CD8-positive, alpha-beta T cell (primary cell): ENCODE measurements at regions of chr21 and their contacts with region 1.

Region 1: GRCh38 chr21:42258153-42258884 is 39.4 kb downstream of the ABCG1 start:
- DNase-seq: peak; percentile 70 to 89 (median 84)
- ATAC-seq: peak; percentile 95
- H3K4me3 ChIP-seq: no peak overlapping the region
- H3K4me3 Mint-ChIP-seq: no peak overlapping the region
- H3K27ac ChIP-seq: no peak overlapping the region
- H3K27ac Mint-ChIP-seq: peak overlapping the region; percentile 42
- H3K4me1 ChIP-seq: peaks cover 14% of the 10 kb centered on the region
- H3K4me1 Mint-ChIP-seq: peaks cover 33% of the 10 kb centered on the region
- H3K27me3 ChIP-seq: no peaks in the 10 kb centered on the region
- H3K27me3 Mint-ChIP-seq: no peaks in the 10 kb centered on the region
- CTCF ChIP-seq: peak; percentile 93

Region 2: GRCh38 chr21:42164064-42164789 is 94.1 kb before region 1 on chr21:
- CTCF ChIA-PET with region 1: interaction called, 88 read pairs
- POLR2A ChIA-PET with region 1: no interaction called
- intact Hi-C with region 1: loop called (anchors 1 kb)
- DNase-seq: peak in 8 of 9 experiments; percentile 36 to 75 (median 58)
- ATAC-seq: peak; percentile 34
- H3K4me3 ChIP-seq: no peak overlapping the region
- H3K4me3 Mint-ChIP-seq: no peak overlapping the region
- H3K27ac ChIP-seq: no peak overlapping the region
- H3K27ac Mint-ChIP-seq: no peak overlapping the region
- H3K4me1 ChIP-seq: peaks cover 34% of the 10 kb centered on the region
- H3K4me1 Mint-ChIP-seq: peaks cover 32% of the 10 kb centered on the region
- H3K27me3 ChIP-seq: no peaks in the 10 kb centered on the region
- H3K27me3 Mint-ChIP-seq: no peaks in the 10 kb centered on the region
- CTCF ChIP-seq: peak; percentile 51

Region 3: GRCh38 chr21:42199488-42200458 is 58.5 kb before region 1 on chr21:
- CTCF ChIA-PET with region 1: interaction called, 5 read pairs
- POLR2A ChIA-PET with region 1: interaction called, 3 read pairs
- intact Hi-C with region 1: loop called in 1 of 2 experiments (anchors 1 kb)
- DNase-seq: peak in 4 of 9 experiments; percentile 34 to 76 (median 48)
- ATAC-seq: peak; percentile 77
- H3K4me3 ChIP-seq: no peak overlapping the region
- H3K4me3 Mint-ChIP-seq: peak overlapping the region; percentile 5
- H3K27ac ChIP-seq: peak overlapping the region; percentile 15 to 40
- H3K27ac Mint-ChIP-seq: peak overlapping the region; percentile 89
- H3K4me1 ChIP-seq: peaks cover 39% of the 10 kb centered on the region
- H3K4me1 Mint-ChIP-seq: peaks cover 68% of the 10 kb centered on the region
- H3K27me3 ChIP-seq: no peaks in the 10 kb centered on the region
- H3K27me3 Mint-ChIP-seq: no peaks in the 10 kb centered on the region
- CTCF ChIP-seq: no peak

Region 4: DNA sequence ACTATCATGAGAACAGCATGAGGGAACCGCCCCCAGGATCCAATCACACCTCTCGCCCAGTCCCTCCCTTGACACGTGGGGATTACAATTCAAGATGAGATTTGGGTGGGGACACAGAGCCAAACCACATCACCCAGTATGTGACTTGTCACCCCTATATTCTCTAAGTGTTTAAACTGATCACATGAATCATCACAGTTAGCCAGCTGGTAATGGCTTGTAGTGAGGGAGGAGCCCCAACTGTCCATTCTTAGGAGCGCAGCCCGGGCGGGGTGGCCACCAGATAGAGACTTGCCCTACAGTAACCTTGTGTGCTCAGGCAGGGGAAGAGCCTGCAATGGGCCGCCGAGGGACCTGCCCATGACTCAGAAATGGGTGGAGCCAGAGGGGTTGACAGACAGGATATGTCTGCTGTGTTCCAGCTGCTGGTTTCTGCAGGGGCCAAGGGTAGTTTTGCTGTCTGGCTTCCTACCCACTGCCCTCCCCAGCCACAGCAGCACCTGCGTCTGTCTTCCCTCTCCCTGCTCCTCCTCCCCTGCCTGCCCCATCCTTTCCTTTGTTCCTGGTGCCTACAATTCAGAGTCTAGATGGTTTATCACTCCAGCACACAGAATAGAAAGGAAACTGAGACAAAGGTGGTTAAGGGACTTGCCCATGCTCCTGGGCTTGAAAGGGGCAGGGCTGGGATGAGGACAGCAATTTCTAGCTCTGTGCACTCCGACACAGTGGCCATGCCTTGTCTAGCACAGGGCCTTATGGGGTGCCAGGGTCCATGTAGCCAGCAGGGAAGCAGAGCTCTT is 30.2 kb before region 1 on chr21:
- CTCF ChIA-PET with region 1: interaction called, 21 read pairs
- POLR2A ChIA-PET with region 1: interaction called, 4 read pairs
- intact Hi-C with region 1: no loop called
- DNase-seq: peak; percentile 79 to 99 (median 90)
- ATAC-seq: peak; percentile 87
- H3K4me3 ChIP-seq: peak overlapping the region in 1 of 2 experiments; percentile 11
- H3K4me3 Mint-ChIP-seq: peak overlapping the region; percentile 47
- H3K27ac ChIP-seq: peak overlapping the region; percentile 54 to 90
- H3K27ac Mint-ChIP-seq: peak overlapping the region; percentile 95
- H3K4me1 ChIP-seq: peaks cover 46% of the 10 kb centered on the region
- H3K4me1 Mint-ChIP-seq: peaks cover 83% of the 10 kb centered on the region
- H3K27me3 ChIP-seq: no peaks in the 10 kb centered on the region
- H3K27me3 Mint-ChIP-seq: no peaks in the 10 kb centered on the region
- CTCF ChIP-seq: no peak

Region 5: DNA sequence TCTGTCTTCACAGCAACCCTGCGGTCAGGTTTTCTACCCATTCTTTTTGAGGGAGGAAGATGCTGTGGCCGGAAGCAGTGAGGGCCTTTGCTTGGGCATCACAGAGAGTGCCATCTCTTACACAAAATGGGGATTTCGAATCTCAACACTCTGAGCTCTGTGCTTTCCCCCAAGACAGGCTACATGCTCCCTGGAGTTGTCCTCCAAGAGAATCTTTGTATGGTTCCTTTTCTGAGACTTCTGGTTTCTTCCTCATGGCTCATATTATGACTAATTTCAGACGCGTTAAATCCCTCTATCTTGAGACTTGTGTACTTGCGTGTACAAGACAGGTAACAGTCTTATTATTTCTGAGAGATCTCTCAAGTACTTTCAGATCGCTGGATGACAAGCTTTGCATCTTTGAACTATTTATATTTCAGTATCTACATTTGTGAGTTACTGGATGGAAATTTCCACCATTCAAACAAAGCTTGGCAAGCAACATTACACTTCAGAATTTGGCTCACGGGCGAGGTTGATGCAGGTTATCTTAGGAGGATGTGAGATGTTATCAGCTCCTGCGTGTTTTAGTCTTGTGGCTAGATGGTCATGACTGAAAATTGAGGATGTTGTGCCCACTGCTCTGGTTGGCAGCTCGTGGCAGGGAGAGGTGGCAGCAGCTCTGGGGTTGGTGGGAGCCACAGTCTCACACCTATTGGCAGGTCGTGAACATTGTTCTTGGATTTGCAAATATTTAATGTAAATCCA is 20.0 kb before region 1 on chr21:
- CTCF ChIA-PET with region 1: interaction called, 27 read pairs
- POLR2A ChIA-PET with region 1: no interaction called
- intact Hi-C with region 1: loop called in 1 of 2 experiments (anchors 2 kb)
- DNase-seq: peak in 7 of 9 experiments; percentile 16 to 88 (median 61)
- ATAC-seq: peak; percentile 29
- H3K4me3 ChIP-seq: no peak overlapping the region
- H3K4me3 Mint-ChIP-seq: peak overlapping the region; percentile 63
- H3K27ac ChIP-seq: peak overlapping the region; percentile 45 to 83
- H3K27ac Mint-ChIP-seq: peak overlapping the region; percentile 93
- H3K4me1 ChIP-seq: peaks cover 62% of the 10 kb centered on the region
- H3K4me1 Mint-ChIP-seq: peaks cover 73% of the 10 kb centered on the region
- H3K27me3 ChIP-seq: no peaks in the 10 kb centered on the region
- H3K27me3 Mint-ChIP-seq: no peaks in the 10 kb centered on the region
- CTCF ChIP-seq: no peak